Left cardiac atrium (tissue), 4 donors: ENCODE measurements at regions of chr18 and their contacts with region 1.

Region 1: DNA sequence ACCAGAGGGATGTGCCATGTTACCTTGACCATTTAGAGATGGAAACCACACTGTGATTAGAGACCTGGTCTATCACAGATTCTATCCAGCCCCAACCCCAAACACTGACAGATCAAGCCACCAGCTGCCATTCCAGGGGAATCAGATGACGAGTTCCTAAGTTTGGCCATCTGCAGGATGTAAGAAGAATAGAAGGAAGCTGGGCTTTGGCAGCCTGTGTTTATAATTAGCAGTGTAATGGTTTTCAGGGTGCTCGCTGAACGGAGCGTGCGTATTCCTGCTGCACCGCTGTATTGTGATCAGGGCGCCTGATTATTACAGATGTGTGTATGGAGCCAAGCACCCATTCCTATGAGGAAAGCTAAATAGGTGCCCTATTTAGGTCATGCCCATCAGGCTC is 138.1 kb downstream of the LRRC30 start:
- DNase-seq: peak; percentile 30
- ATAC-seq: peak; percentile 22 to 28

Region 2: GRCh38 chr18:7566567-7567473 is 197.8 kb after region 1 on chr18 and contains the start of gene PTPRM:
- intact Hi-C with region 1: loop called (anchors 10 kb)
- DNase-seq: peak; percentile 93
- ATAC-seq: peak; percentile 90 to 93
- total RNA-seq, gene PTPRM: 51.4 to 75.5 TPM

Region 3: DNA sequence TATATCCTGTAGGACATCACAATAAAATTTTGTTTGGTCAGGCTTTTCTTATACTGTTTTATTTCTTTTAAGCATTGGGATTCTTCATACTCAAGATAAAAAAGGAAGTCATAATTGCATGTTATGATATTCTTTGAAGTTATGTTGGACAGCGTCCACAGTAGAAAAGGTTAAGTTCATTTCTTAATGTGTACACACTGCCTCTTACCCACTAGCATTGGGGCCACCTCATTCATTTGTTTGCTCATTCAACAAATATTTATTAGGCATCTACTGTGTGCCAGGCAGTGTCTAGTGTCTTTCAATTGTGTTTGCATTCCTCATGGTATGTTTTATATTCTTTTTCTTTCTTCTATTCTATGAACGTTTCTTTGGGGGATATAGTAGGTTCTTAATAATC is 268.3 kb after region 1 on chr18:
- intact Hi-C with region 1: no loop called
- DNase-seq: no peak
- ATAC-seq: no peak